Caco-2 (cell line): ENCODE measurements at regions of chr2 and their contacts with region 1.

Region 1: GRCh38 chr2:128362846-128363228 is 44.2 kb upstream of the HS6ST1 start:
- DNase-seq: peak; percentile 75 to 88
- H3K4me3 ChIP-seq: no peak overlapping the region
- H3K4me3 Mint-ChIP-seq: peak overlapping the region; percentile 24
- H3K27ac Mint-ChIP-seq: peak overlapping the region; percentile 96
- H3K4me1 ChIP-seq: peaks cover 28% of the 10 kb centered on the region
- H3K4me1 Mint-ChIP-seq: peaks cover 13% of the 10 kb centered on the region
- H3K27me3 ChIP-seq: no peaks in the 10 kb centered on the region
- H3K27me3 Mint-ChIP-seq: no peaks in the 10 kb centered on the region
- CTCF ChIP-seq: no peak

Region 2: GRCh38 chr2:128069769-128070168 is 293.1 kb before region 1 on chr2:
- CTCF ChIA-PET with region 1: no interaction called
- POLR2A ChIA-PET with region 1: no interaction called
- intact Hi-C with region 1: no loop called
- DNase-seq: no peak
- H3K4me3 ChIP-seq: no peak overlapping the region
- H3K4me3 Mint-ChIP-seq: no peak overlapping the region
- H3K27ac Mint-ChIP-seq: no peak overlapping the region
- H3K4me1 ChIP-seq: no peaks in the 10 kb centered on the region
- H3K4me1 Mint-ChIP-seq: no peaks in the 10 kb centered on the region
- H3K27me3 ChIP-seq: no peaks in the 10 kb centered on the region
- H3K27me3 Mint-ChIP-seq: no peaks in the 10 kb centered on the region
- CTCF ChIP-seq: no peak

Region 3: GRCh38 chr2:128374001-128374710 is 11.3 kb after region 1 on chr2:
- CTCF ChIA-PET with region 1: no interaction called
- POLR2A ChIA-PET with region 1: interaction called, 6 read pairs
- intact Hi-C with region 1: loop called (anchors 1 kb)
- DNase-seq: peak; percentile 61 to 79
- H3K4me3 ChIP-seq: no peak overlapping the region
- H3K4me3 Mint-ChIP-seq: no peak overlapping the region
- H3K27ac Mint-ChIP-seq: peak overlapping the region; percentile 92
- H3K4me1 ChIP-seq: peaks cover 37% of the 10 kb centered on the region
- H3K4me1 Mint-ChIP-seq: peaks cover 46% of the 10 kb centered on the region
- H3K27me3 ChIP-seq: no peaks in the 10 kb centered on the region
- H3K27me3 Mint-ChIP-seq: no peaks in the 10 kb centered on the region
- CTCF ChIP-seq: no peak

Region 4: DNA sequence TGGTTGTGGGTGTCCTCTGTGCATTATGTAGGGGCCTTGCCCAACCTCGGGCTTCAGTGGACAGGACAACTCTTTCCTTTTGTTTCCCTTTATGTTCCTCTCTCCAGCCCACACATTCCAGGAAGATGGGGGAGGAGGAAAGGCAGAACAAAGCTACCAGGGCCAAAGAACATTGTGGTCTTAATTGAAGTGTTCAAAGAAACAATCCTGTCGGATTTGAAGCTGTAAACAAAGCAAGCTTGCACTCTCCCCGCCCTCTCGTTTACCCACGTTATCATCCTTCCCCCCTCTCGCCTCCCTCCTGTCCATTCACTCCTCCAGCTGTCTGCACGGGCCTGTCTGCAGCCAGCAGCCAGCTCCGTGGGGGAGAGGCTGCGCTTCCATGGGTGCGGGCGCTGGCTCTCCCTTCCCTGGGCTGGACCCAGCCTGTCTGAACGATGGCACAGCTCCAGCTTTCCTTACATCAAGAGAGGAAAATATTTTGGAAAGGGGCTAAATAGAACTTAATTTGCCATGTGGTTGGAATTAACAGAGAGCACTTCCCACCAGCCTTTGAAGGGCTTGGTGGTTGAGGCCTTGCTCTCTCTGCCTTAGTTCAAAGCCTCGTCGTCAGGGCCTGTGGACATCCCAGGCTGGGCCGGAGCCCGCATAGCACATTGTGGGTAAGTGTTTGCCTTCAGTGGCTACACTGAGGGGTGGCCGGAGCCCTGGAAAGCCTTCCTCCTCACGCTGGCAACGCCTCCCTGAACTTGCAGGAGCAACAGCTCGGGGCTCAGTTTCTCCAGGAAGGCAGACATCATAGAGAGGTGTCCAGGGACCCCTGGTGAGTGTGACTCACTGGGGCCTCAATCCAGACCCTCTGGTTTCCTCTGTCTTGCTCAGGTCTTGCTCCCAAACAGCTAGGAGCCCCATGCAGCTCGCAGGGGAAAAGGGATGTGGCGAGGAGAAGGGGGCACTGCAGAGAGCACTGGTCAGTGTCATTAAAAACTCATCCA is 16.5 kb after region 1 on chr2:
- CTCF ChIA-PET with region 1: no interaction called
- POLR2A ChIA-PET with region 1: interaction called, 6 read pairs
- intact Hi-C with region 1: loop called (anchors 1 kb)
- DNase-seq: peak; percentile 74 to 77
- H3K4me3 ChIP-seq: no peak overlapping the region
- H3K4me3 Mint-ChIP-seq: peak overlapping the region; percentile 53
- H3K27ac Mint-ChIP-seq: peak overlapping the region; percentile 64
- H3K4me1 ChIP-seq: peaks cover 53% of the 10 kb centered on the region
- H3K4me1 Mint-ChIP-seq: peaks cover 21% of the 10 kb centered on the region
- H3K27me3 ChIP-seq: no peaks in the 10 kb centered on the region
- H3K27me3 Mint-ChIP-seq: no peaks in the 10 kb centered on the region
- CTCF ChIP-seq: no peak